ENCODE measurements at regions of chr13 and their contacts with region 1.

Region 1: GRCh38 chr13:46595136-46595886 is 42.3 kb downstream of the LRCH1 start:
- DNase-seq: peak; percentile 87
- H3K4me3 Mint-ChIP-seq: peak overlapping the region; percentile 69
- H3K27ac Mint-ChIP-seq: peak overlapping the region; percentile 86
- H3K4me1 Mint-ChIP-seq: peaks cover 42% of the 10 kb centered on the region
- H3K27me3 Mint-ChIP-seq: no peaks in the 10 kb centered on the region
- CTCF ChIP-seq: no peak

Region 2: GRCh38 chr13:46303742-46304385 is 291.4 kb before region 1 on chr13:
- CTCF ChIA-PET with region 1: no interaction called
- POLR2A ChIA-PET with region 1: no interaction called
- intact Hi-C with region 1: no loop called
- DNase-seq: no peak
- H3K4me3 Mint-ChIP-seq: no peak overlapping the region
- H3K27ac Mint-ChIP-seq: no peak overlapping the region
- H3K4me1 Mint-ChIP-seq: peaks cover 5% of the 10 kb centered on the region
- H3K27me3 Mint-ChIP-seq: no peaks in the 10 kb centered on the region
- CTCF ChIP-seq: no peak

Region 3: GRCh38 chr13:46487748-46488147 is 107.6 kb before region 1 on chr13:
- CTCF ChIA-PET with region 1: no interaction called
- POLR2A ChIA-PET with region 1: no interaction called
- intact Hi-C with region 1: no loop called
- DNase-seq: no peak
- H3K4me3 Mint-ChIP-seq: no peak overlapping the region
- H3K27ac Mint-ChIP-seq: no peak overlapping the region
- H3K4me1 Mint-ChIP-seq: peaks cover 7% of the 10 kb centered on the region
- H3K27me3 Mint-ChIP-seq: peaks cover 53% of the 10 kb centered on the region
- CTCF ChIP-seq: no peak

Region 4: DNA sequence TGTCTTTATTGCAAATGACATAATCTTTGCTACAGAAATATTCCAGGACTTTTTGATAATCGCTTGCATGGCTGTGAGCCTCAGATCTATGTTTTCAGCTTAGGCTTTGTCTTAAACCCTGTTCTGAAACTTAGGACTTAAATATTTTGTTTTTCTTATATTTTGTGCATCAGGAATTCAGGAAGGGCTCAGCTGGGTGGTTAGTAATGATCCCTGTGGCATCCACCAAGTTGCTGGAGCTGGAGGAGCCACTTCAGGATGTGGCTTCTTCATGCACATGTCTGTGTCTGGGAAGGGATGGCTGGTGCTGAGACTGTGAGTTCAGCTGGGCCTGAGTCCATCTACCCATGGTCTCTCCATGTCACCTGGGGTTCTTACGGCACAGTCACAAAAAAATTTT is 91.3 kb before region 1 on chr13:
- CTCF ChIA-PET with region 1: no interaction called
- POLR2A ChIA-PET with region 1: no interaction called
- intact Hi-C with region 1: no loop called
- DNase-seq: no peak
- H3K4me3 Mint-ChIP-seq: no peak overlapping the region
- H3K27ac Mint-ChIP-seq: no peak overlapping the region
- H3K4me1 Mint-ChIP-seq: peaks cover 5% of the 10 kb centered on the region
- H3K27me3 Mint-ChIP-seq: no peaks in the 10 kb centered on the region
- CTCF ChIP-seq: no peak

Region 5: GRCh38 chr13:46577696-46578589 is 17.4 kb before region 1 on chr13:
- CTCF ChIA-PET with region 1: interaction called, 5 read pairs
- POLR2A ChIA-PET with region 1: interaction called, 25 read pairs
- intact Hi-C with region 1: no loop called
- DNase-seq: no peak
- H3K4me3 Mint-ChIP-seq: no peak overlapping the region
- H3K27ac Mint-ChIP-seq: no peak overlapping the region
- H3K4me1 Mint-ChIP-seq: peaks cover 28% of the 10 kb centered on the region
- H3K27me3 Mint-ChIP-seq: no peaks in the 10 kb centered on the region
- CTCF ChIP-seq: no peak

Region 6: GRCh38 chr13:46698910-46699460 is 103.7 kb after region 1 on chr13:
- CTCF ChIA-PET with region 1: no interaction called
- POLR2A ChIA-PET with region 1: no interaction called
- intact Hi-C with region 1: no loop called
- DNase-seq: no peak
- H3K4me3 Mint-ChIP-seq: no peak overlapping the region
- H3K27ac Mint-ChIP-seq: no peak overlapping the region
- H3K4me1 Mint-ChIP-seq: no peaks in the 10 kb centered on the region
- H3K27me3 Mint-ChIP-seq: no peaks in the 10 kb centered on the region
- CTCF ChIP-seq: no peak

Measured in MCF 10A (cell line).